AG04449 (cell line): ENCODE measurements at regions of chr1 and their contacts with region 1.

Region 1: GRCh38 chr1:40153073-40153770 is 8.0 kb upstream of the RLF start:
- DNase-seq: no peak
- H3K4me3 ChIP-seq: no peak overlapping the region
- CTCF ChIP-seq: peak; percentile 65

Region 2: DNA sequence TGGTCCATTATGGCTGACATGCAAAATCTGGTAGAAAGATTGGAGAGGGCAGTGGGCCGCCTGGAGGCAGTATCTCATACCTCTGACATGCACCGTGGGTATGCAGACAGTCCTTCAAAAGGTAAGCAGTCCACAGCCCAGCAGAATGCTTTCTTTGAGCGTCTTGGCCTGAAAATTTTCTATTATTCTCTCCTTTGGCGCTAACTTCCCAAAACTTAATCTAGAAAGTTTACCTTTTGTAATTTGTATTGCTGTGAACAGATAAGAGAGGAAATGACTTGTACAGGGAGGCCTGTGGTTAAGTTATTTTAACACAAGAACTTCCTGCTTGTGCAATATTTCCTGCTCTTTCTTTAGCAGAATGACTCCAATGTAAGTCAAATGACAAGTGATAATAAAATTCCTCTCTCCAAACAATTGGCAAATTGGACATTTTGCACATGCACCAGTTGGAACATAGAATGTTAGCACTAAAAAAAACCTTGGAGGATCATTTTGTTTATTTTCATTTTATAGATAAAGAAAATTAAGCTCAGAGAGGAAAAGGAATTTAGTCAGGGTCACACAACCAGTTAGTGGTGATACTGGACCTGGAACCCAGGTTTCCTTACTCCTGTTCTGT is 93.8 kb before region 1 on chr1:
- CTCF ChIA-PET with region 1: no interaction called
- POLR2A ChIA-PET with region 1: no interaction called
- DNase-seq: no peak
- H3K4me3 ChIP-seq: no peak overlapping the region
- CTCF ChIP-seq: no peak

Region 3: GRCh38 chr1:40078512-40079333 is 74.5 kb before region 1 on chr1:
- CTCF ChIA-PET with region 1: interaction called, 15 read pairs
- POLR2A ChIA-PET with region 1: no interaction called
- DNase-seq: no peak
- H3K4me3 ChIP-seq: no peak overlapping the region
- CTCF ChIP-seq: peak; percentile 79

Region 4: DNA sequence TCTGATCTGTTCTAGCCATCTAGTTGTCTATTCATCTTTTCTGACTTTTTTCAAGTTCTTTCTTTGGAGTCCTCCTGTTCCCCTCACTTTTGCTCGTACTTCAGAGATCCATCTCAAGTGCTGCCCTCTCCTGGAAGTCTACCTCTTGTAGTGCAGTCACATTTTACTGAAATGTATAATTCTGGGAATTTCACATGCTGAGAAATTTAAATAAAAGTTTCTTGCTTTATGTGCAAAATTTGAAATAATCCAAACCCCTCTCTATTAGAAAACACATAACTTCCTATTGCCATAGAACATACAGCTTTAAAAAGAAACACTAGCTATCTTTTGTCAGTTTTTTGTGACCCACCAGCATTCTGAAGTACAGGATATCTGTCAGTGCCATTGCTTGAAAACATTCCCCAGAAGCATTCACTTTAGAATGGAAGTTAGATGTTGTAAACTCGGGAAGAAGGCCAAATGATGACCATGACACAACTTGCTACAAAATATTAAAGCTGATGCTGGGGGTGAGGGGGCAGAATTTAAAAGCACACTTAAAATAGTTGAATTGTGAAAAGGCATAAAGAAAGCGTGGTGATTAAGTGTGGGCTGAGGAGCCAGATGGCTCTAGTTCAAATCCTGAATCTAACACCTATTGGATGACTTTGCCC is 30.0 kb after region 1 on chr1:
- CTCF ChIA-PET with region 1: interaction called, 15 read pairs
- POLR2A ChIA-PET with region 1: no interaction called
- DNase-seq: no peak
- H3K4me3 ChIP-seq: no peak overlapping the region
- CTCF ChIP-seq: no peak

Region 5: DNA sequence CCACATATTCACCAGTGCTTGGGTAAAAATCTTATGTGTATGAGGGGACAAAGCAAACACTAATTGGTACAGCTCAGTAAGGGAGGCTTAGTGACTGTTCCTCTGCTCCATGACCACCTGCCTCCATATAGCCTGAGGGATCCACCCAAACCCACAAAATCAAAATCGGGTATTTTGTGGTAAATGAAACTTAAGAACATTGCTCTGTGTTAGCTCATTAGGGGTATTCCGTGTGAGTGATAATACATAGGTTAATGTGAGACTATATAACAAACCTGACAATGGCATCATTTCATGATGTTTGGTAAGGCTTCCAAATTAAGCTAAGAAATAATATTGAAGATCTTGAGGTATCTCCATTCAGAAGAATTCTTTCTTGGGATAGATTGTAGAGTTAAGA is 138.1 kb after region 1 on chr1:
- CTCF ChIA-PET with region 1: interaction called, 11 read pairs
- POLR2A ChIA-PET with region 1: no interaction called
- DNase-seq: no peak
- H3K4me3 ChIP-seq: no peak overlapping the region
- CTCF ChIP-seq: no peak

Region 6: GRCh38 chr1:40315239-40315794 is 162.1 kb after region 1 on chr1:
- CTCF ChIA-PET with region 1: interaction called, 149 read pairs
- POLR2A ChIA-PET with region 1: no interaction called
- DNase-seq: peak; percentile 10
- H3K4me3 ChIP-seq: peak overlapping the region; percentile 36
- CTCF ChIP-seq: peak; percentile 91

Region 7: GRCh38 chr1:40344597-40344996 is 191.4 kb after region 1 on chr1:
- CTCF ChIA-PET with region 1: interaction called, 433 read pairs
- POLR2A ChIA-PET with region 1: no interaction called
- DNase-seq: no peak
- H3K4me3 ChIP-seq: no peak overlapping the region
- CTCF ChIP-seq: no peak

Region 8: DNA sequence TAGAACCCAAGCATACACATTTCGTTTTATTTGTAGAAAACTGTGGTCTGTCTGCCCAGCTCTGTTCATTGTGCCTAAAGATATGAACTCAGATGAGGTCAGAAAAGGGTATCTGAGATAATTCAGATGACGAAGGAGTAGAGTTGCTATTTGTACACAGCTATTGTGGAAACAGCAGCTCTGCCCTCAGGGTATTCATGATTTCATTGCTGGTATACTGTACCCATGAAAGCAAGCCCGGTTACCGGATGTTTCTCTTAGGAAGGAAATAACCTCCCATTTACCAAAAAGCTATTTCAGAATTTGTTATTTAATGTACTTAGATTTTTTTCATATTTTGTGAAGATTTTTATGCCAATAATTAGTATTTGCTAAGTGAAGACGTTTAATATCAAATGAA is 258.1 kb after region 1 on chr1:
- CTCF ChIA-PET with region 1: interaction called, 119 read pairs
- POLR2A ChIA-PET with region 1: no interaction called
- DNase-seq: no peak
- H3K4me3 ChIP-seq: no peak overlapping the region
- CTCF ChIP-seq: no peak